Esophagus squamous epithelium (tissue), 5 donors: ENCODE measurements at regions of chr6 and their contacts with region 1.

Region 1: DNA sequence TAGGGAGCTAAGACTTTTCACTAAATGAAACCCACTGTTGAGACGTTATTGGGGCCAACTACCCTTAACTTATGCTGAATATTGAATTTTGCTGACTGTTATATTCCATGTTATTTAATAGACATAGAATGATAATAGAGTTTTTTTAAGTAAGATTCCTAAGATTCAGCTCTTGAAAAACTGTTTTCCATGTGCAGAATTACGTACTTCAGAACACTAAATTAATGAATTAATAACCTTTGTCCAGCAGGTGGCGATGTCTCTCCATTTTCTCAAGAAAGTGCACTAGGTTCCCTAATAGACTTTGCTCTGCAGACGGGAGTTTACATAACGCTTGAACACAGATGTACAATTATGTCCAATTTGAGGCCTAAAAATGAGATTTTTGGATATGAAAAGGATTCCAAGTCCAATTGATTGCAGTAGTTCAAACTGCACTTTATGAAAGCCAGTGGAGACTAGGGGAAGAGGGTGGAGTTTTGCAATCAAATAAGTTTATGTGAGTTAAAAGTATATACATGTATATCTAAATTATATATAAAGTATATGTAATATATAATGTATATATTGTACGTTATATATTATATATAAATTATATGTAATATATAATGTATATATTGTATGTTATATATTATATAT is 282.1 kb downstream of the UST start:
- DNase-seq: no peak
- H3K4me3 ChIP-seq: no peak overlapping the region
- H3K27ac ChIP-seq: no peak overlapping the region
- H3K4me1 ChIP-seq: peaks cover 0 to 14% (median 7%) of the 10 kb centered on the region in 3 donors
- H3K27me3 ChIP-seq: no peaks in the 10 kb centered on the region
- CTCF ChIP-seq: peak; percentile 50 to 79 (median 73)
- POLR2A ChIP-seq: no peak

Region 2: DNA sequence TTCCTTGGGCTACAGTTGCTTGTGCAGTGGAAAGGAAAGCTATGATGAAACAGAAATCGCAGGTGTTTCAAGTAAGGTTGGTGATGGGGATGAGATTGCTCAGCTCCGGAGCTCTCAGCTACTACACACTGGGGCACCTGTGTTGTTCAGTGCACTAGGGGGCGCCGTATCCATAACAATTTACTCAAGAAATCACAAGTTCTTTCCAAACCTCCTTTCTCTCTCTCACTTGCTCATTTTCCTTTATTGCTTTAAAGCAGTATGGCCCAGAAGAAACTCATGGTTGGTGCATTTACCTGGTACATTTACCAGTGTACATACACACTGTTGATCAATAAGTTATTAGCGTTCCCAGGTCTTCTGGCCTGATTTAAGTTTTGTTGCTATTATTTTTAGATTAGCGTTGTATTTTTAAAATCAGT is 53.4 kb after region 1 on chr6:
- intact Hi-C with region 1: loop called (anchors 5 kb)
- DNase-seq: peak; percentile 5
- H3K4me3 ChIP-seq: no peak overlapping the region
- H3K27ac ChIP-seq: no peak overlapping the region
- H3K4me1 ChIP-seq: peaks cover 0 to 29% (median 10%) of the 10 kb centered on the region in 3 donors
- H3K27me3 ChIP-seq: peaks cover 0 to 5% (median 0%) of the 10 kb centered on the region in 4 donors
- CTCF ChIP-seq: peak; percentile 62 to 86 (median 76)
- POLR2A ChIP-seq: no peak